ENCODE measurements at regions of chr16 and their contacts with region 1.

Region 1: DNA sequence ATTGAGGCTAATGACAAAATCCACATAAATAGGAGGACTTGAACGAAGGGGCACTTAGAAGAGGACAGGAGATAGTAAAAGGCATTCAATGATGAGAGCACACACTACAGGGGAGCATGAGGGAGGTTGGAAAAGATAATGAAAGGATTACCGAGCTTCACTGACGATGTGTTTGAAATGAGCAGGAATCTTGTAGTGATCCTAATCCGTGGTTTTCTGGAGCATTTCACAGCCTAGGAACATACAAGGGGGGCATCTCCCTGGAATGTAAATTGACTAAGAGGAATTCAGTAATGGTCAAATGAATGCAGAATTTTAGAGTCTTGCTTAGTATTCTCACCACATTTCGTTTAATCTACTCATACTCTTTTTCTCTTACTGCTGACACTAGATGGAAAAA is 5.2 kb downstream of the ATMIN start:
- DNase-seq: no peak
- ATAC-seq: no peak
- H3K4me3 ChIP-seq: no peak overlapping the region
- H3K27ac ChIP-seq: no peak overlapping the region
- H3K4me1 ChIP-seq: peaks cover 11 to 21% of the 10 kb centered on the region in 2 donors
- H3K27me3 ChIP-seq: no peaks in the 10 kb centered on the region
- CTCF ChIP-seq: no peak
- POLR2A ChIP-seq: no peak

Region 2: GRCh38 chr16:79528338-79528737 is 1512.5 kb before region 1 on chr16:
- in situ Hi-C with region 1: no loop called
- intact Hi-C with region 1: loop called (anchors 5 kb)
- DNase-seq: no peak
- ATAC-seq: no peak
- H3K4me3 ChIP-seq: no peak overlapping the region
- H3K27ac ChIP-seq: peak overlapping the region in 1 of 4 donors; percentile 3
- H3K4me1 ChIP-seq: peaks cover 20 to 23% of the 10 kb centered on the region in 2 donors
- H3K27me3 ChIP-seq: no peaks in the 10 kb centered on the region
- CTCF ChIP-seq: no peak
- POLR2A ChIP-seq: no peak

Region 3: GRCh38 chr16:80759419-80760162 is 281.3 kb before region 1 on chr16:
- in situ Hi-C with region 1: no loop called
- intact Hi-C with region 1: no loop called
- DNase-seq: no peak
- ATAC-seq: no peak
- H3K4me3 ChIP-seq: no peak overlapping the region
- H3K27ac ChIP-seq: no peak overlapping the region
- H3K4me1 ChIP-seq: no peaks in the 10 kb centered on the region
- H3K27me3 ChIP-seq: no peaks in the 10 kb centered on the region
- CTCF ChIP-seq: no peak
- POLR2A ChIP-seq: no peak